ENCODE measurements at regions of chr12 and their contacts with region 1.

Region 1: GRCh38 chr12:88132390-88132789 is 9.5 kb downstream of the CEP290 start:
- DNase-seq: no peak
- ATAC-seq: no peak
- H3K4me3 ChIP-seq: no peak overlapping the region
- H3K27ac ChIP-seq: no peak overlapping the region
- H3K4me1 ChIP-seq: no peaks in the 10 kb centered on the region
- H3K27me3 ChIP-seq: no peaks in the 10 kb centered on the region
- CTCF ChIP-seq: no peak

Region 2: DNA sequence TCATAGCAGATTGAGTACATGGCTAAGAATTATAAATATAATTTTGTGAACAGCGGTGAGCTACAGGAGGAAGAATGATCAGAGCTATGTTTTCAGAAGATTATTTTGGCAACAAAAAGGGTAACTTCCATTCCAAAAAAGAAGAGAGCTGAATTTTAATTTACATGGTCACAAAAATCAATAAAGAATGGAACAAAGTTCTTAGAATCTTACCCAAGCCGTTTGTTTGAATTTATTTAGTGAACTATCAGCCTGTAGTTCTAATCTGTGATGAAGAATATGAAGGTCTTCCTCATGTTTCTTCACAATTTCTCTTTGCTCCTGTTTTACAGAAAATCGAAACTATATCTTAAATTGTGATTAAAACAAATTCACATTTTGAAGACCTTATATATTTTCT is 48.8 kb before region 1 on chr12:
- CTCF ChIA-PET with region 1: no interaction called
- POLR2A ChIA-PET with region 1: no interaction called
- intact Hi-C with region 1: no loop called
- DNase-seq: no peak
- ATAC-seq: no peak
- H3K4me3 ChIP-seq: no peak overlapping the region
- H3K27ac ChIP-seq: no peak overlapping the region
- H3K4me1 ChIP-seq: no peaks in the 10 kb centered on the region
- H3K27me3 ChIP-seq: no peaks in the 10 kb centered on the region
- CTCF ChIP-seq: no peak

Region 3: DNA sequence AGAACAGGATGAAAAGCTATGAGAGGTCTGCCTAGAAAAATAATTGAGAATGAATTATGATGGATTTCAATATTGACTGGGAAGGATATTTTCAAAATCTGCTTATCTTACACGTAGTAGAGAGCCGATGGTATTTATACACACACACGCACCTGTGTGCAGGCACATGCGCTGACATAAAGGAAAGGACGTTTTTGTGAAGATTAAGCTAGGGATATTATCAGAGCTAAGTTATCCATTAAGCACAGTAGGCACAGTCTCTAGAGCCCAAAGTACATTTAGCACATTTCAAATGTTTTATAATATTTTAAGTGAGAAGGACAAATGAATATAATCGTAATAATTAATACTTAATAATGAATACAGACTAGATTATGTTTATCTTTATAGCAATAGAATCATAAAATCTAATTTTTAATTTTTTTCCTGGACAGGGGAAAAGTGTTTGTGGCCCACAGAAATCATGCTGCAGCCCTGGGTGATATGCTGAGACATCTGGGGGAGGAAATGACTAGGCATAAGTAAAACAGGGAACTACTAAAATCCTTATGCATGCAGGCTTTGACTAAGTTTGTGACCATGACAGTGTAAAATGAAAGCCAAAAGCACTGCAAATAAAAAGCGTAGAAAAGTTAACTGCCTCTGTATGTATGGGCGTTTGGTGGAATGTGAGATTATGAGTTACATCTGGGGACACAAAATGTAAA is 301.8 kb after region 1 on chr12:
- CTCF ChIA-PET with region 1: interaction called, 13 read pairs
- POLR2A ChIA-PET with region 1: no interaction called
- intact Hi-C with region 1: no loop called
- DNase-seq: peak; percentile 32
- ATAC-seq: peak; percentile 75
- H3K4me3 ChIP-seq: no peak overlapping the region
- H3K27ac ChIP-seq: peak overlapping the region; percentile 38
- H3K4me1 ChIP-seq: peaks cover 13% of the 10 kb centered on the region; the same call in 1 of the 2 replicates
- H3K27me3 ChIP-seq: no peaks in the 10 kb centered on the region
- CTCF ChIP-seq: no peak

Measured in PC-3 (cell line).